ENCODE measurements at regions of chr2 and their contacts with region 1.

Region 1: DNA sequence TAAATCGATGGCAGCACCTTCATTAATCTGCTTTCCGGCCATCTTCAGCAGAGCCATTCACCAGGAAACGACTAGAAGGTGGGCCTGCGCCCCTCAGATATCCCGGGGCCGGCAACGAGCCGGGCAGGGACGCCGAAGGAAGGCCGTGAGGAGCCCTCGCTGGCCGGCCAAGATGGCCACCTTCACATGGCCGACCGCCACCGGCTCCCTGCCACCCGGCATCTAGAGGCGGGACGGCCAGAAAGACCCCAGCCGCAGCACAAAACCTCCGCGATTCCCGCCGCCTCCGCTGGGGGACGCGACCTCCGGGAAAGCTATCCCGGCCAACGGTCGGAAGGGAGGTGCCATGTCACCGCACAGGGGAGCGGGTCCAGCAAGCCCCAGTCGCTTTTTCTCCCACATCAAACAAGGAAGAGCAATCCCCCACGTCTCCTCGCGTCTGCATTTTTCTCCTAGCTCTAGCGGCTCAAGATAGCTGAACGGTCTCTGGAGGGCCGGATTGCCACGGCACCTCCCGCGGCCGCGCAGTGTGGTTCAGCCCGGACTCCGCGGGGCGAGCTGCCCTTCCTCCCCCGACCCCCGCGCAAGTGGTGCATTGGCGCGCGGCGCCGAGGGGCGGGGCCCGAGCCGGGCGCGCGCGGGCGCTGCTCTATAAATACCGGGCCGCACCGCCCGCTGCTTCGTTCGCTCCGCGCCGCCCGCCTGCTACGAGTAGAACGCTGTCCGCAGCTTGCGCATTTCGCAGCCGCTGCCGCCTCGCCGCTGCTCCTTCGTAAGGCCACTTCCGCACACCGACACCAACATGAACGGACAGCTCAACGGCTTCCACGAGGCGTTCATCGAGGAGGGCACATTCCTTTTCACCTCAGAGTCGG is at the start of gene MAT2A:
- DNase-seq: peak; percentile 71 to 96 (median 87)
- ATAC-seq: peak; percentile 77
- H3K4me3 ChIP-seq: peak within 1 kb of the TSS; percentile 96
- H3K4me3 Mint-ChIP-seq: peak within 1 kb of the TSS; percentile 94
- H3K27ac ChIP-seq: peak within 1 kb of the TSS; percentile 87 to 91
- H3K27ac Mint-ChIP-seq: peak within 1 kb of the TSS; percentile 93
- H3K4me1 ChIP-seq: peaks cover 28% of the 10 kb centered on the region
- H3K4me1 Mint-ChIP-seq: peaks cover 47% of the 10 kb centered on the region
- H3K27me3 ChIP-seq: no peaks in the 10 kb centered on the region
- H3K27me3 Mint-ChIP-seq: no peaks in the 10 kb centered on the region
- CTCF ChIP-seq: no peak
- total RNA-seq, gene MAT2A: 105 to 107 TPM

Region 2: GRCh38 chr2:84459018-84459943 is 1079.4 kb before region 1 on chr2 and contains the start of gene SUCLG1:
- CTCF ChIA-PET with region 1: no interaction called
- POLR2A ChIA-PET with region 1: no interaction called
- intact Hi-C with region 1: loop called in 1 of 2 experiments (anchors 5 kb)
- DNase-seq: peak; percentile 72 to 94 (median 87)
- ATAC-seq: peak; percentile 96
- H3K4me3 ChIP-seq: peak within 1 kb of the TSS; percentile 81 to 95
- H3K4me3 Mint-ChIP-seq: peak within 1 kb of the TSS; percentile 98
- H3K27ac ChIP-seq: peak within 1 kb of the TSS; percentile 78 to 97
- H3K27ac Mint-ChIP-seq: peak within 1 kb of the TSS; percentile 98
- H3K4me1 ChIP-seq: peaks cover 30% of the 10 kb centered on the region
- H3K4me1 Mint-ChIP-seq: peaks cover 46% of the 10 kb centered on the region
- H3K27me3 ChIP-seq: no peaks in the 10 kb centered on the region
- H3K27me3 Mint-ChIP-seq: no peaks in the 10 kb centered on the region
- CTCF ChIP-seq: no peak
- total RNA-seq, gene SUCLG1: 31.6 to 35.1 TPM

Region 3: DNA sequence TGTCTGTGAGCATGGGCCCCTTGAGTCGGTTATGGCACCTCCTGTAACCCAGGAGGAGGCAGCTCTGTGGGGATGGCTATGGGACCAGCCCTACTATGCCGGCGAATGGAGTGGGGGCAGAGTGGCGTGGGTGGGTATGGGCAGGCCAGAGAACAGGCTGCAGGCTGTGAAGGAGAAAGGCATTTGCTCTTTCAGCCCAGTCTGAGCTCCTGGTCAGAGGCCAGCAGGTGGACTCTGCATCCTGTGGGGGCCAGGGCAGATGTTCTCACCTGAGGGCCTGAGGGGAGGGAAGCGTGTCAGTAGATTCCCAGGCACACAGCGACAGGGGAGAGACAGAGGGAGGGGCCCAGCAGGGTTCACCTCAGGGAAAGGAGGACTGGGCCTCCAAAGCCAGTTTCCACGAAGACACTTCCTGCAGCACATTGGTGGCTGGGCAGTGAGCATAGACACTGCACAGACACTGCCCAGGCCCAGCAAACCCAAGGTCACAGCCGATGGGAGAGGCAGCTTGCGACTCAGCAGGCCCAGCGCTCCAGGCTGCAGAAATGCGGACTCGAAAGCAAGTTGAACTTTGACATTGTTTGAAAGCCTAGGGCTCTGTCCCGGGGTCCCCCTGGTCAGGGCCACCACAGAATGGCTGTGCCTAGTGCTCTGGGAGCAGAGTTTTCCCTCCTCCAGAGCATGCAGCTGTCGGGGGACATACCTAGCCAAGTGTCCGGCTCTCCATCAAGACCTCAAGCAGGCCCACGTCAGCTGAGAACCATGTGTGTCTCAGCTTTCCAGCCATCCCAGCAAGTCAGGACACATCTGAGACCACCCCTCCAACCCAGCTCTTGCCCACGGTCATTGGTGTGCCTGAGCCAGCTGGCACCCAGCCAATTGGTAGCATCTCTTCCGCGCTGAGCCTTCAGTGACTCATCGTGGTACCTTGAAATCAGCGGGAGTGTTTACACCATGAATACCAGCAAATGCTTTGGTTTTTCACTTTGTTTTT is 264.7 kb before region 1 on chr2:
- CTCF ChIA-PET with region 1: no interaction called
- POLR2A ChIA-PET with region 1: no interaction called
- intact Hi-C with region 1: no loop called
- DNase-seq: no peak
- ATAC-seq: no peak
- H3K4me3 ChIP-seq: no peak overlapping the region
- H3K4me3 Mint-ChIP-seq: no peak overlapping the region
- H3K27ac ChIP-seq: no peak overlapping the region
- H3K27ac Mint-ChIP-seq: no peak overlapping the region
- H3K4me1 ChIP-seq: no peaks in the 10 kb centered on the region
- H3K4me1 Mint-ChIP-seq: no peaks in the 10 kb centered on the region
- H3K27me3 ChIP-seq: no peaks in the 10 kb centered on the region
- H3K27me3 Mint-ChIP-seq: peaks cover 22% of the 10 kb centered on the region
- CTCF ChIP-seq: no peak

Region 4: DNA sequence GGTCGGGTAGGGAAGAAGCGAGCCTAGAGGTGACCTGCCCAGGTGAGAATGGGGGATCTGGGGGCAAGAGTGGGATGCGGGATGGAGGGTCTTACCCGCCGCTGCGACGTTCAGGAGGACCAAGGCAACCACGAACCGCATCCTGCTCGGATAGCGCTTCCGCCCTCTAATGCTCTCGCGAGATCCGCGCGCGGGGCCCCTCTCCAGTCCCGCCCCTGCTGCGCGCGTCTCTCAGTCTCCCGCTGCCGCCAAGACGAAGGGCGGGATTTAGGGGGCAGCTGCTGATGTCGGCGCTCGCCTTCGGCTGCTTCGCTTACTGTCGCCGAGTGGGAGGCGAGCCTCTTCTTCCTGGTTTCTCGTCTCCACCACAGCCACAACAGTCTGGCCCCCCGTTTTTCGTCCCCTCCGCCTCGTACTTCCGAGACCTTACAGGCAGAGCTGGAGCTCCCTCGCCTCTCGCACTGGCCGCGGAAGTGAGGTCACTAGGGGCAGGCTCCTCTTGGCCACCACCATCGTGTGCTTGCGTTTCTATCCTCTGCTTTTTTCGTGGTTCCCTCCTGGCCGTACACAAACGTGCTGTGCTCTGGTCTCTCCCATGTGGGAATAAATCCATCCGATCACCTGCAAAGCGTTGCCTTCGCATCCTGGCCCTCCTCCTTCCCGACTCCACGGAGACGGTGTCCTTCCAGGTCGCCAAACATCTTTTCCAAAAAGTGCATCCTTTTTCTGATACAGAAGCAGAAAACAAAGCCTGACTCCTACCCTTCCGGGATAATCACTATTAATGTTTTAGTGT is 210.7 kb before region 1 on chr2 and contains the start of gene TGOLN2:
- CTCF ChIA-PET with region 1: no interaction called
- POLR2A ChIA-PET with region 1: interaction called, 30 read pairs
- intact Hi-C with region 1: loop called in 1 of 2 experiments (anchors 2 kb)
- DNase-seq: peak; percentile 88 to 97 (median 94)
- ATAC-seq: peak; percentile 85
- H3K4me3 ChIP-seq: peak within 1 kb of the TSS; percentile 84 to 96
- H3K4me3 Mint-ChIP-seq: peak within 1 kb of the TSS; percentile 95
- H3K27ac ChIP-seq: peak within 1 kb of the TSS; percentile 97
- H3K27ac Mint-ChIP-seq: peak within 1 kb of the TSS; percentile 99
- H3K4me1 ChIP-seq: peaks cover 37% of the 10 kb centered on the region
- H3K4me1 Mint-ChIP-seq: peaks cover 45% of the 10 kb centered on the region
- H3K27me3 ChIP-seq: no peaks in the 10 kb centered on the region
- H3K27me3 Mint-ChIP-seq: no peaks in the 10 kb centered on the region
- CTCF ChIP-seq: no peak
- total RNA-seq, gene TGOLN2: 127 to 128 TPM

Region 5: DNA sequence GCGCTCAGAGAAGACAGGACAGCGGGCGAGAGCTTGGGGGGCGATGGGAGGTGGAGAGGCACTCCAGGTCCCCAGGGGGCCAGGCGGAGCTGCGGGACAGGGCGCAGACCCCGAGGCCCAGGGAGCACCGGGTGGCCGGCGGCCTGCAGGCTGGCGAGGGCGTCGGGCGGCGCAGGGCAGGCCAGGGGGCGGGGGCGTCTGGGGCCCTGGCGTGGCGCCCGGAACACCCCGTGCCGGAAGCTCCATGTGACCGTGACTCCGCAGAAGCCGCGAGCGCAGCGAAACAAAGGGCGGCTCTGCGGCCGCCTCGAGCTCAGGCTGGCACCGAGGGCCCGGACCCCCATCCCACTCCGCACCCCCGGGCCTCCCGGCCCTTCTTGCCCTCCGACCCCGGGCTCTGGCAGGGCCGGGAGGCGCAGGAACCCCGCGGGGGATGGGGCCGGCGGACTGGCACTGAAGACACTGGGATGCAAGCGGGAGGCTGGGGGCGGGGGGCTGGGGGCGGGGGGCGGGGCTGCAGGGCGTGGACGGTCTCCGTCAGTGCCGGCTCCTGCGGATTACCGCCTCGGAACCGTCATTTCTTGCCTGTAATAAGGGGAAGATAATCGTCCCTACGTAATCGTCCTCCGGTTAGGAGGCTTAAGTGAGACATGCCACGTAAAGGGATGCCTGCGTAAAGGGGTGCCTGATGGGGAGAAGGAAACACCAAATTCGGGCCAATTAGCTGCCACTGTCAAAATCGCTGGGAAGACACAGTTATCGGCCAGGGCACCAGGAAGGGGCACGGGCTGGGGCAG is 101.0 kb before region 1 on chr2:
- CTCF ChIA-PET with region 1: interaction called, 4 read pairs
- POLR2A ChIA-PET with region 1: interaction called, 60 read pairs
- intact Hi-C with region 1: loop called in 1 of 2 experiments (anchors 1 kb)
- DNase-seq: peak; percentile 49 to 91 (median 75)
- ATAC-seq: peak; percentile 82
- H3K4me3 ChIP-seq: peak overlapping the region; percentile 46 to 60
- H3K4me3 Mint-ChIP-seq: peak overlapping the region; percentile 86
- H3K27ac ChIP-seq: peak overlapping the region; percentile 56 to 77
- H3K27ac Mint-ChIP-seq: peak overlapping the region; percentile 94
- H3K4me1 ChIP-seq: peaks cover 32% of the 10 kb centered on the region
- H3K4me1 Mint-ChIP-seq: peaks cover 23% of the 10 kb centered on the region
- H3K27me3 ChIP-seq: no peaks in the 10 kb centered on the region
- H3K27me3 Mint-ChIP-seq: no peaks in the 10 kb centered on the region
- CTCF ChIP-seq: no peak

Region 6: DNA sequence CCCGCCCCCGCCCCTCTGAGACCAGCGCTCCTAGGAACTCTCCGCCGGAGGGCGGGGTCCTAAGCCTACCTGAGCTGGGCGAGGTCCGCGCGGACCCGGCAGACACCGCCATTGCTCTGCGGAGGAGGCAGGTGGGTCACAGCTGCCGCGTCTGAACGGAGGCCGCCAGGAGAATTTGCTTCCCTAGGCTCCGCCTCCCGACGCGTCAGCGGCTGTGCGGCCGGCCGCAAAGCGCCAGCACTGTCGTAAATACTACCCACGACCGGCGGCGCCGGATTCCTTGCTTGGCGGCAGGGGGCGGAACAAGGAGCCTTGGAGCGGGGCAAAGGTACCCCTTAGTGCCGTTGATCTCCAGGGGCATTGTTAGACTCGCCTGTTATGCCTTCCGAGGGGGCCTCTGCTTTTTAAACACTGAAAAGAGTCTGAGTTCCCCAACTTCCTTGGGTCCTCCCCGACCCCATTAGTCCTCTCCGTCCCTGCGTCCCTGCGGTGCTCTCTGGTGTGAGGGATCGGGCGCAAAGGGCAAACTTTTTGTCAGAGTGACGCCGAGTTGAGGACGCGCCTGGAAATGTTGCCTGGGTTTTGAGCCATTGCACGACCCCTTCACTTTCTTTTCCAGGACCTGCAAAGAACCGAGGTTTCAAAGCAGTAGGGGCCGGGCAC is 22.7 kb after region 1 on chr2 and contains the start of gene GGCX:
- CTCF ChIA-PET with region 1: interaction called, 115 read pairs
- POLR2A ChIA-PET with region 1: interaction called, 22 read pairs
- intact Hi-C with region 1: loop called (anchors 2 kb)
- DNase-seq: peak; percentile 89 to 97 (median 96)
- ATAC-seq: peak; percentile 91
- H3K4me3 ChIP-seq: peak within 1 kb of the TSS; percentile 77 to 82
- H3K4me3 Mint-ChIP-seq: peak within 1 kb of the TSS; percentile 94
- H3K27ac ChIP-seq: peak within 1 kb of the TSS; percentile 72 to 73
- H3K27ac Mint-ChIP-seq: peak within 1 kb of the TSS; percentile 96
- H3K4me1 ChIP-seq: peaks cover 6% of the 10 kb centered on the region
- H3K4me1 Mint-ChIP-seq: peaks cover 21% of the 10 kb centered on the region
- H3K27me3 ChIP-seq: no peaks in the 10 kb centered on the region
- H3K27me3 Mint-ChIP-seq: no peaks in the 10 kb centered on the region
- CTCF ChIP-seq: no peak
- total RNA-seq, gene GGCX: 20.7 to 24.0 TPM

Region 7: GRCh38 chr2:85602476-85603234 is 63.9 kb after region 1 on chr2 and contains the start of gene TMEM150A:
- CTCF ChIA-PET with region 1: no interaction called
- POLR2A ChIA-PET with region 1: interaction called, 5 read pairs
- intact Hi-C with region 1: loop called (anchors 1 to 2 kb)
- DNase-seq: peak; percentile 71 to 93 (median 87)
- ATAC-seq: peak; percentile 91
- H3K4me3 ChIP-seq: peak within 1 kb of the TSS; percentile 92 to 97
- H3K4me3 Mint-ChIP-seq: peak within 1 kb of the TSS; percentile 91
- H3K27ac ChIP-seq: peak within 1 kb of the TSS; percentile 58 to 67
- H3K27ac Mint-ChIP-seq: peak within 1 kb of the TSS; percentile 89
- H3K4me1 ChIP-seq: peaks cover 27% of the 10 kb centered on the region
- H3K4me1 Mint-ChIP-seq: peaks cover 37% of the 10 kb centered on the region
- H3K27me3 ChIP-seq: no peaks in the 10 kb centered on the region
- H3K27me3 Mint-ChIP-seq: no peaks in the 10 kb centered on the region
- CTCF ChIP-seq: no peak
- total RNA-seq, gene TMEM150A: 5.7 to 6.0 TPM

Region 8: DNA sequence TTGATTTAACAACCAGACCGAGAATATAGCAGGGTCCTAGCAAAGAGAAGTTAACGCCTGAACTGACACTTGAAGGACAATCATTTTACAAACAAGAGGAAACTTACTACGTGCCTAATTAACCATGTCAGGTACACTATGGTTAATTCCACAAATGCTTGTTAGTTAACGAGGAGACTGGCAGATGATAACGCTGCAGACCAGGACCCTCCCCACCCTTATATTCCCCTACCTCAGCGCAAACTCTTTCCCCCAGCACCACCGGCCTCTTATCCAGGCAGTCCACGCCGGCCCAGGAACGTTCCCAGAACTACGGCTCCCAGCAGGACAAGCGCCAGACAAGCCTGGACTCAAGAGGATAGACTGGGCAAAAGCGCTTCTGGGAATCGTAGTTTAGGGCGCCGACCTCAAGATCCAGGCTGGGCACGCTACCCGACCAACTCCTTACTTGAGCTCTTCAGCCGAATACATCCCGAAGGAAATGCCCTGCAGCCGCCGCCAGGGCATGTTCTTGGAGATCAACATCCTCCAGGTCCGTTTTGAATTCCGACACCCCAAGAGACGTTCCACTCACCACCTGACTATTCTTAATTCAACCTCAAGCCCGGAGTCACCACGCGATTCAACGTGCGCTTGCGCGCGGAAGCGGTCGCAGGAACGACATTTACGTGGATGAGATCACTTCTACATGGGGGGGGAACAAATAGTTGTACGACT is 566.7 kb after region 1 on chr2 and contains the start of gene POLR1A:
- CTCF ChIA-PET with region 1: no interaction called
- POLR2A ChIA-PET with region 1: no interaction called
- intact Hi-C with region 1: loop called in 1 of 2 experiments (anchors 5 kb)
- DNase-seq: peak; percentile 64 to 94 (median 83)
- ATAC-seq: peak; percentile 77
- H3K4me3 ChIP-seq: peak within 1 kb of the TSS; percentile 66 to 92
- H3K4me3 Mint-ChIP-seq: peak within 1 kb of the TSS; percentile 92
- H3K27ac ChIP-seq: peak within 1 kb of the TSS; percentile 80 to 87
- H3K27ac Mint-ChIP-seq: peak within 1 kb of the TSS; percentile 99
- H3K4me1 ChIP-seq: peaks cover 24% of the 10 kb centered on the region
- H3K4me1 Mint-ChIP-seq: peaks cover 66% of the 10 kb centered on the region
- H3K27me3 ChIP-seq: no peaks in the 10 kb centered on the region
- H3K27me3 Mint-ChIP-seq: no peaks in the 10 kb centered on the region
- CTCF ChIP-seq: no peak
- total RNA-seq, gene POLR1A: 12.3 to 15.2 TPM

Measured in CD8-positive, alpha-beta T cell (primary cell).